Activated B cell treated with CpG ODN at 0.5 μM for 24 hours (primary cell): ENCODE measurements at regions of chr12 and their contacts with region 1.

Region 1: GRCh38 chr12:108757856-108758255 is 26.5 kb upstream of the CORO1C start:
- DNase-seq: no peak
- ATAC-seq: no peak
- H3K4me3 Mint-ChIP-seq: no peak overlapping the region
- H3K27ac Mint-ChIP-seq: no peak overlapping the region
- H3K4me1 Mint-ChIP-seq: no peaks in the 10 kb centered on the region
- H3K27me3 Mint-ChIP-seq: no peaks in the 10 kb centered on the region
- CTCF ChIP-seq: no peak

Region 2: GRCh38 chr12:108724054-108724889 is 33.6 kb before region 1 on chr12:
- CTCF ChIA-PET with region 1: no interaction called
- POLR2A ChIA-PET with region 1: interaction called, 12 read pairs
- intact Hi-C with region 1: no loop called
- DNase-seq: no peak
- ATAC-seq: peak; percentile 71
- H3K4me3 Mint-ChIP-seq: no peak overlapping the region
- H3K27ac Mint-ChIP-seq: peak overlapping the region; percentile 78
- H3K4me1 Mint-ChIP-seq: peaks cover 65% of the 10 kb centered on the region
- H3K27me3 Mint-ChIP-seq: no peaks in the 10 kb centered on the region
- CTCF ChIP-seq: no peak

Region 3: DNA sequence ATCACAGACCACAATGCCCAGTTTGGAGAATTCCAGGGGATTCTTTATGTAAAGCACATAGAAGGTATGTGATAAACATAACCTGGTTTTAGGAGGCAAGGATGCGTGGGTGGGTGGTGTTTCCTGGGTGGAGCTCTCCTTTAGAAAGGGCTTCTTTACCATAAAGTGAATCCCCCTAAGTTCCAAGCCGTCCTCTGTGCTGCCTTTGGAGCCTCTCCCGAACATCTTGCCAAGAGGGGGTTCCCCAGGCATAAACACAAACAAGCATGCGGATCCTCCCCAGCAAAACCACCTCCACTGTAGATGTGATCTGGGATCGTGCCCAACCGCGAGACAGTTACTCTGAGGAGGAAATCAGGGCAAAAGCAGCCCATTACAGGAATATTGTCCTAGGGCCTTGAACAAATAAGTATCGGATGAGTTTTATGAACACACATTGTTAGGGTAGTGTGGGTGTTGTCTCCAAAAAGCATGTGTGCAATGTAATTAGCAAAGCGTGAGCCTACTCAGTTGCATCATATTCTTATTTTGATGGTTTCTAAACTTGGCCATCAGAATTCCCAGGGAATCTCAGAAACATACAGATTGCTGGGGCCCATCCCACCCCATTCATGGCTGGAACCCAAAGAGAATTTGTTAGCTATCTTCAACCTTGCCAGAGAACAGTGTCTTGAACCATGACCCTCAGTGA is 22.3 kb after region 1 on chr12:
- CTCF ChIA-PET with region 1: no interaction called
- POLR2A ChIA-PET with region 1: interaction called, 12 read pairs
- intact Hi-C with region 1: no loop called
- DNase-seq: no peak
- ATAC-seq: no peak
- H3K4me3 Mint-ChIP-seq: no peak overlapping the region
- H3K27ac Mint-ChIP-seq: no peak overlapping the region
- H3K4me1 Mint-ChIP-seq: no peaks in the 10 kb centered on the region
- H3K27me3 Mint-ChIP-seq: no peaks in the 10 kb centered on the region
- CTCF ChIP-seq: no peak